Activated CD4-positive, alpha-beta T cell treated with anti-CD3 and anti-CD28 coated beads for 36 hours (primary cell): ENCODE measurements at regions of chr3 and their contacts with region 1.

Region 1: DNA sequence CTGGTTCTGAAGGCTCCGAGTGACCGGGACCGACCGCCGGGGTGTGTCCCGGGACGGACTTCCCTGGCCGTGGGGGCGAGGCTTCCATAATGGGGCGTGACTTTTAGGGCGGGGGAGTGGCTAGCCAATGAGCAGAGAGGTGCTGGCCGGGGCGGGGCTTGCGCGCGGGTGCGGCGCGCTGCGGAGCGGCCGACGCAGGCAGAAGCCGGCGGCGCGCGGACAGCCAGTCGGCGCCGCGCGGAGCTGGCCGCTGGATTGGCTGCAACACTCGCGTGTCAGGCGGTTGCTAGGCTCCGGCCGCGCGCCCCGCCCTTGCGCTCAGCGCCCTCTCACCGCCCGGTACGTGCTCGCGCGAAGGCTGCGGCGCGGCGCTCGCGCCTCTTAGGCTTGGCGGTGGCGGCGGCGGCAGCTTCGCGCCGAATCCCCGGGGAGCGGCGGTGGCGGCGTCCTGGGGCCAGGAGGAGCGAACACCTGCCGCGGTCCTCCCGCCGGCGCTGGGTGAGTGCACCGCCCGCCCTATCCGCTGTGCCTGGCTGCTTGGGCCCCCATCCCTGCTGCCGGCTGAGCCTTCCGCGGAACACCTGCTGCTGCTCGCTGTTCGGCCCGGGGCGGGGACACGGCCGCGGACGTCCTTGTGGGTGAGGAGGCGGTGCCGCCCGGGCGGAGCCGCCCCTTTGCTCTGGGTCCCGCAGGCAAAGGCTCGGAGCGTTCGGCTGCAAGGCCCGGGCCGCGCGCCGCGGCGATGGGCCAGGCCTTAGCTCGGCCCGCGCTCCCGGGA is at the start of gene DAG1:
- DNase-seq: peak; percentile 98
- ATAC-seq: peak; percentile 92
- H3K4me3 Mint-ChIP-seq: peak within 1 kb of the TSS; percentile 81
- H3K27ac Mint-ChIP-seq: peak within 1 kb of the TSS; percentile 92
- H3K4me1 Mint-ChIP-seq: peaks cover 20% of the 10 kb centered on the region
- H3K27me3 Mint-ChIP-seq: no peaks in the 10 kb centered on the region
- total RNA-seq, gene DAG1: 9.0 to 9.2 TPM

Region 2: DNA sequence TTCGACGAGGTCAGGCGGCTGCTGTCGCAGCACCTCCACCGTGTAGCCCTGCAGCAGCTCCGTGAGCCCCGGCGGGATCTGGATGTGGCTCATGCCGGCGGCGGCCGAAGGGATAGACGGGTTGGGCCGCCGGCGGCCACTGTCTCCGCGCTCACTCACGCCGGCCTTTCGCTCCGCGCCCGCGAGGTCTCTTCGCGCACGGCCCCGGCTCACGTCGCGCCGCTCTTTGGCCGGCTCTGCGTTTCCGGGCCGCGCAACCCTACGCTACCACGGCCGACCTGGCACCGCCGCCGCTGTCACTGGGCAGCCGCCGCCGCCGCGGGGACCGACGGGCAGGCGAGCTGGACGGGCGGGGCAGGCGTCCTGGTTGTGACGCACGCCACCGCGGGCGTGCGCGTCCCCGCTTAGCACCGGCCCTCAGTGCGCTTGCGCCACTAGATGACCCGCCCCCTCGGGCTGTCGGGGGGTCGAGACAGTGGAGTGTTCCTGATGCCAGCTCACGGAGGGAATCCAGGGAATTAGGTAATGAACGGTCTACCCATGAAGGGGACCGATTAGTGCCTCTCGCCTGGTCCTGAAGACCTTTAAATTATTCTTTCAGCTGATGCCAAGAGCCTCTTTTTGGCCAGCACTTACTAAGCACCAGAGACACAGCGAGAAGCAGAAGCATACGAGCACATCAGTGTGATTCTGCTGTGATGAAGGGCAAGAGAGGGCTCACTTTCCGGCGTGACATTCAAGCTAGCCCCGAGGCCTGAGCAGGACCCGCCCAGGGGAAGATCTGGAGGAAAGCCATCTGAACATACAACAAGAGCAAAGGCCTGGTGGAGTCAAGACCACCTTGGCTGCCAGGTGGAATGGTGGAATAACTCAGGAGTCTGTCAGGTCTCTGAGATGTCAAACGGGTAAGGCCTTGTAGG is 622.4 kb before region 1 on chr3 and contains the start of gene PRKAR2A:
- CTCF ChIA-PET with region 1: no interaction called
- POLR2A ChIA-PET with region 1: no interaction called
- intact Hi-C with region 1: loop called in 1 of 2 experiments (anchors 1 kb)
- DNase-seq: peak; percentile 89
- ATAC-seq: peak; percentile 89
- H3K4me3 Mint-ChIP-seq: peak within 1 kb of the TSS; percentile 82
- H3K27ac Mint-ChIP-seq: peak within 1 kb of the TSS; percentile 87
- H3K4me1 Mint-ChIP-seq: peaks cover 26% of the 10 kb centered on the region
- H3K27me3 Mint-ChIP-seq: no peaks in the 10 kb centered on the region
- total RNA-seq, gene PRKAR2A: 28.7 to 35.2 TPM

Region 3: GRCh38 chr3:49093853-49094767 is 376.0 kb before region 1 on chr3 and contains the start of gene QRICH1:
- CTCF ChIA-PET with region 1: interaction called, 3 read pairs
- POLR2A ChIA-PET with region 1: no interaction called
- intact Hi-C with region 1: loop called in 1 of 2 experiments (anchors 1 kb)
- DNase-seq: peak; percentile 98
- ATAC-seq: peak; percentile 86
- H3K4me3 Mint-ChIP-seq: peak within 1 kb of the TSS; percentile 90
- H3K27ac Mint-ChIP-seq: peak within 1 kb of the TSS; percentile 94
- H3K4me1 Mint-ChIP-seq: peaks cover 33% of the 10 kb centered on the region
- H3K27me3 Mint-ChIP-seq: no peaks in the 10 kb centered on the region
- total RNA-seq, gene QRICH1: 119 to 171 TPM

Region 4: DNA sequence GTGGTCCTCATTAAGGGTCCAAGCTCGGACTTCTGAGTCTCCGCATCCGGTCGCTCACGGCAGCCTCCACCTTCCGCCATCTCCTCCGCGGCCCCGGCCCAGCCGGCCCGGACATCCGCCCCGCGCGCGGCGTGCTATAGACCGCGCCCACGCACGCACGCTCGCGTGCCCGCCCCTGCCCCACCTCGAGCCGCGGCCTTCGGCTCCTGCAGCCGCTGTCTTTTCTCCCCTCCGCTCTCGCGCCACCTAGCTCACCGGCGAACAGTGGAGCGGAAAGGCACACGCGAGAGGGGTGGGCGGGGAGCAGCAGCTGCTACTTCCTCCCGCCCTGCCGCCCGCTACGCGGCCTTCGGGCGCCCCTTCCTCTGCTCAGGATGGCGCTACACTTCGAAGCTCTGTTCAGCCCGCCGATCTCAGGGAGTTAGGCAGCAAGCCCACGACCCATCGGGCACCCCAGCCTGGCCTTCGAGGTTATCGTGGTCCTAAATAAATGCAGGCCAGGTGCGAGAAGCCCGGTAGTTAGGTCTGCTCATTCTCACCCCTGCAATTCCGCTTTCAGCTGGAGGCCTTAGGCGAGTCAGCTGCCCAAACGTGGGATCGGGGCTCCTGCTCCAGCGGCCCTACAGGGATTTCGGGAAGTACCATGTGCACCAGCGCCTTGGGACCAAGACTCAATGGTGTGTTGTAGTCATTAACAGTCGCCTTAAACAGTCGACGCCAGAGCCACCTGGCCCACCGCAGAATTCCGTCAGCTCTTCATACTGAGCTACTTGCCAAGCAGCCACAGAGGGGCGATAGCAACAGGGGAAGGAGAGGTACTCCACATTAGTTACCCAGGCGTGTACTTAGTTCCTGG is 130.0 kb before region 1 on chr3 and contains the start of gene USP4:
- CTCF ChIA-PET with region 1: interaction called, 3 read pairs
- POLR2A ChIA-PET with region 1: interaction called, 10 read pairs
- intact Hi-C with region 1: loop called (anchors 1 kb)
- DNase-seq: peak; percentile 97
- ATAC-seq: peak; percentile 89
- H3K4me3 Mint-ChIP-seq: peak within 1 kb of the TSS; percentile 99
- H3K27ac Mint-ChIP-seq: peak within 1 kb of the TSS; percentile 96
- H3K4me1 Mint-ChIP-seq: peaks cover 49% of the 10 kb centered on the region
- H3K27me3 Mint-ChIP-seq: no peaks in the 10 kb centered on the region
- total RNA-seq, gene USP4: 69.3 to 71.8 TPM

Region 5: GRCh38 chr3:49647741-49648140 is 177.6 kb after region 1 on chr3:
- CTCF ChIA-PET with region 1: no interaction called
- POLR2A ChIA-PET with region 1: no interaction called
- intact Hi-C with region 1: no loop called
- DNase-seq: no peak
- ATAC-seq: no peak
- H3K4me3 Mint-ChIP-seq: no peak overlapping the region
- H3K27ac Mint-ChIP-seq: no peak overlapping the region
- H3K4me1 Mint-ChIP-seq: no peaks in the 10 kb centered on the region
- H3K27me3 Mint-ChIP-seq: no peaks in the 10 kb centered on the region

Region 6: DNA sequence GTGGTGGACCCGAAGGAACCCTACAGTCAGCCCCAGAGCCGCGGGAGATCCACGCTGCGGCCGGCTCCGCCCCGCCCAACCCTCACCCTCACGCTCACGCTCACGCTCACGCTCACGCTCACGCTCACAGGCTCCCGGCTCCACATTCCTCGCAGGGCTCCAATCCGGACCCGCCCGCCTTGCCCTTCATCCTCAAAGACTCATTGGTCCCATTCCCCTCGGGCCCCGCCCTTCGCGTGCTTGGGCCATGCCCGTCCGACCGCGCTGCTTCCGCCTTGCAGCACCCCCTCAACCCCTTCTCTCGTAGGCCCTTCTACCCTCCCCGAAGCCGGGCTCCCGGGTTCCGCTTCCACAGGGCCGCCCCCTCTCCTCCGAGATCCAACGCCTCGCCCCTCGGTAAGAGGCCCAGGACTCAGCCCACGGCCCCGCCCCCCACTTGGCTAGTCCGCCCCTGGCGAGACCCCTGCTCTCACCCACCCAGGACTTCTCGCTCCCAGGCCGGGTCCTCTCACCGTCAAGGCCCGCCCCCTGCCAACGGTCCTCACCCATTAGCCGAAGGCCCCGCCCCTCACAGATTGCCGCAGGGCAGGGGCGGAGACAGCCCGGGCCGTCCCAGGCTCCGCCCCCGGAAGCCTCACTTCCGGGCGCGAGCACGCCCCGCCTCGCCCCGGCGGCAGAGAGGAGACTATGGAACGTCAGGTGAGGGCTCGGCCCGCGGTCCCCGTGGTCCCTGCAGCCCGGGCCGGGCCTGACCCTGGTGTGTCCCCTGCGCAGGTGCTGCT is 203.8 kb after region 1 on chr3 and contains the start of gene APEH:
- CTCF ChIA-PET with region 1: interaction called, 3 read pairs
- POLR2A ChIA-PET with region 1: no interaction called
- intact Hi-C with region 1: loop called (anchors 1 to 2 kb)
- DNase-seq: peak; percentile 99
- ATAC-seq: peak; percentile 91
- H3K4me3 Mint-ChIP-seq: peak within 1 kb of the TSS; percentile 88
- H3K27ac Mint-ChIP-seq: peak within 1 kb of the TSS; percentile 94
- H3K4me1 Mint-ChIP-seq: peaks cover 29% of the 10 kb centered on the region
- H3K27me3 Mint-ChIP-seq: no peaks in the 10 kb centered on the region
- total RNA-seq, gene APEH: 110 to 137 TPM

Region 7: DNA sequence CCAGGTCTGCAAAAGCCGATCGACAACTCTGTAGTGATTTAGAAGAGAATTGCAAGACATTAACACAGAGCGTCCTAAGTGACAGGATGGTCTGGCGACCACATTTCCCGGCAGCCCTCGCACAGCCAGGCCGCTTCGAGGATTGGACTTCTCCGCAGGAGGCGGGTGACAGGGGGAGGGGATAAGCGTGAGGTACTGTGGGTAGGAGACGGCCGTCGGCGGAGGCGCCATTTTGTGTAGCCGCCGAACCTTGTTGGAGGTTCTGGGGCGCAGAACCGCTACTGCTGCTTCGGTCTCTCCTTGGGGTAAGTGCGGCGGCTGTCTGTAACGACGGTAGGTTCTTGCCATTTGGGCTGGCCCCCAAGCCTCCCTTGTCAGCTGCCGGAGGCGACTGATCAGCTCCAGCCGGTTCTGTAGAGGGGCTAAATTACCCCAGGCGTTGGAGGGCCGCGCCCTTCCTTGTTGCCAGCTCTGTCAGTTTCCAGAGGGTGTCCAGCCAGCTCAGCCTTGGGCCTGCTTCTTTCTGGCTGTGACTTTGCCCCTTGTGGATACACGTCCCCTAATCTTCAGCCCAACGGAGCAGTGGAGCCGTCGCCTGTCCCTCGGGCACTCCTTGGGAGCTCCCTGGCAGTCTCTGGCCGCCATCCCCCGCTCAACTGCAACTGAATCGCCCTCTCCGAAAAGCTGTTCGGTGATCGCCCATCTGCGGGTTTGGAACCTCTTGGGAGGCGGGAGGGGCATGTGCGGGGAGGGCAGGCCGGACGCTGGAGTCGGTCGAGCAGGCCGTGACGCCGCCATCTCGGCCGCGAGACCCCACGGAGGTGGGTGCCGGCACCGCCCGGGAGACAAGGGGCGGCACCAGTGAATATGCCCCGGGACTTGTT is 618.8 kb after region 1 on chr3 and contains the start of gene RBM5:
- CTCF ChIA-PET with region 1: no interaction called
- POLR2A ChIA-PET with region 1: no interaction called
- intact Hi-C with region 1: loop called in 1 of 2 experiments (anchors 1 kb)
- DNase-seq: peak; percentile 97
- ATAC-seq: peak; percentile 100
- H3K4me3 Mint-ChIP-seq: peak within 1 kb of the TSS; percentile 99
- H3K27ac Mint-ChIP-seq: peak within 1 kb of the TSS; percentile 97
- H3K4me1 Mint-ChIP-seq: peaks cover 28% of the 10 kb centered on the region
- H3K27me3 Mint-ChIP-seq: no peaks in the 10 kb centered on the region
- total RNA-seq, gene RBM5: 118 to 131 TPM